GM10248 (cell line): ENCODE measurements at regions of chr1 and their contacts with region 1.

Region 1: GRCh38 chr1:52726265-52727113 is at the start of gene ZYG11B:
- DNase-seq: peak; percentile 98
- CTCF ChIP-seq: no peak

Region 2: DNA sequence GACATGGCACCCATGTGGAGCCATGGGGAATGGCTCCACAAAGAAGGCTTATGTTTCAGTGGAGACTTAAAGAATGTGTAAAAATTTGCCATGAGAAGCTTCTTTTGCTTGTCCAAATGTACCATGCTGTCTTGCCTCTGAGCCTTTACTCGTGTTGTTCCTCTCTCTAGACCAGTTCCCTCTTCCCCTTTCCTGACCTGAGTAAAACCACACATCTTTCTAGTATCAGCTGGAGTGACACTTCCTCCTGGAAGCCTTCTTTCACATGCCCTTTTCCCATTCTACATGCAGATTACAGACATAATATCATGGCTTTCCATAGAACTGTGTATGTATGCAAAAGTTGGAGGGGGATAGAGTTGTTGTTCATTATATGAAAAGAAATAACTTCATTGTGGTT is 138.0 kb before region 1 on chr1:
- CTCF ChIA-PET with region 1: no interaction called
- POLR2A ChIA-PET with region 1: no interaction called
- DNase-seq: no peak
- CTCF ChIP-seq: no peak

Region 3: DNA sequence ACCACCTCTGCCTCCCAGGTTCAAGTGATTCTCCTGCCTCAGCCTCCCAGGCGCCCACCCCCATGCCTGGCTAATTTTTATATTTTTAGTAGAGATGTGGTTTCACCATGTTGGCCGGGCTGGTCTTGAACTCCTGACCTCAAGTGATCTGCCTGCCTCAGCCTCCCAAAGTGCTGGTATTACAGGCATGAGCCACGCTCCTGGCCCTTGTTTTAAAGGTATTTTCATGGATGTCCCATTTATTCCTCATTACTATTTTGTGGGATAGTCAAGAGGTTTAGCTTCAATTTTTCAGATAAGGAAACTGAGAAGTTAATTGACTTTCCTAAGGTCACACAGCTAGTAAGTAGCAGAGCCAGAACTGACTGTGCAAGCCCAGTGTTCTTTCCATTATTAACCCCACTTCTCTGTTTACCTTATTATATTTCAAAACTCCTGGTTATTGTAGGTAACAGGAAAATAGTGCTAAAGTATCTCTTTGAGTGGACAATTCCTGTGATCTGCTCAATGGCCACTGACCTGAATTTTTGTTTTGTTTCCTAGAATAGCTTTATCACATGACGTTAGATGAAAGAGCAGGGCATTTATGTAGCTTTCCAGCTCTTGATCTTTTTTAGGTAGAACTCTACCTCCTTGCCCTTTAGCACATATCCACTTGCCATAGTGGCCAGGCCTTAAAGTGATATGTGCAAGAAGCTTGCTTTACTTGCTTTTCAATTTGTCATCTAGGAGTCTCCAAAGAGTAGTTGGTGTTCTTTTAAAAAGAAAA is 13.4 kb after region 1 on chr1:
- CTCF ChIA-PET with region 1: interaction called, 9 read pairs
- POLR2A ChIA-PET with region 1: interaction called, 10 read pairs
- DNase-seq: no peak
- CTCF ChIP-seq: no peak